ENCODE measurements at regions of chr17 and their contacts with region 1.

Region 1: GRCh38 chr17:46159686-46160085 is 33.5 kb downstream of the KANSL1 start:
- DNase-seq: no peak
- H3K4me3 Mint-ChIP-seq: no peak overlapping the region
- H3K27ac Mint-ChIP-seq: peak overlapping the region; percentile 25
- H3K4me1 Mint-ChIP-seq: peaks cover 62% of the 10 kb centered on the region
- H3K27me3 Mint-ChIP-seq: no peaks in the 10 kb centered on the region
- CTCF ChIP-seq: no peak

Region 2: GRCh38 chr17:45867702-45868101 is 292.0 kb before region 1 on chr17:
- CTCF ChIA-PET with region 1: no interaction called
- intact Hi-C with region 1: no loop called
- DNase-seq: no peak
- H3K4me3 Mint-ChIP-seq: no peak overlapping the region
- H3K27ac Mint-ChIP-seq: no peak overlapping the region
- H3K4me1 Mint-ChIP-seq: no peaks in the 10 kb centered on the region
- H3K27me3 Mint-ChIP-seq: peaks cover 90% of the 10 kb centered on the region
- CTCF ChIP-seq: no peak

Region 3: GRCh38 chr17:45973099-45973780 is 186.4 kb before region 1 on chr17:
- CTCF ChIA-PET with region 1: no interaction called
- intact Hi-C with region 1: no loop called
- DNase-seq: no peak
- H3K4me3 Mint-ChIP-seq: no peak overlapping the region
- H3K27ac Mint-ChIP-seq: no peak overlapping the region
- H3K4me1 Mint-ChIP-seq: no peaks in the 10 kb centered on the region
- H3K27me3 Mint-ChIP-seq: peaks cover 73% of the 10 kb centered on the region
- CTCF ChIP-seq: no peak

Region 4: DNA sequence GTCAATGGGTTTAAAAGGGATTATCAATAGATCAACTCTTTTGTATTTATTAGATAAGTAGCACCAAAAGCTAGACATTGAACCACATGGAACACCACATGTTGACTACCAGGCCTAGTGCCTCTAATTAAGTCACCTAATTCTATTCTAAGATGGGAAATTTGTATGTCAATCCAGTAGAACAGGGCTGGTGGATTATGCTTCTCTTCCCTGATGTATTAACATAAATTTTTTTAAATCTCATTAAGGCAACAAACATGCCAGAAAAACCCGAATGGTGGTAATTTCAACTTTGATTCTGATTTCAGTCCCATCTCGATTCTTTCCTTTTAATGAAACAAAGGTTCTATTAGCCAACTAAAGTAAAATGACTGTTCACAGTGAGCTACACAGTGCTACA is 59.1 kb before region 1 on chr17:
- CTCF ChIA-PET with region 1: interaction called, 5 read pairs
- intact Hi-C with region 1: loop called (anchors 5 kb)
- DNase-seq: no peak
- H3K4me3 Mint-ChIP-seq: peak overlapping the region; percentile 19
- H3K27ac Mint-ChIP-seq: peak overlapping the region; percentile 24
- H3K4me1 Mint-ChIP-seq: peaks cover 57% of the 10 kb centered on the region
- H3K27me3 Mint-ChIP-seq: no peaks in the 10 kb centered on the region
- CTCF ChIP-seq: no peak

Measured in Calu3 (cell line).